ENCODE measurements at regions of chr3 and their contacts with region 1.

Region 1: GRCh38 chr3:14225421-14225820 is 46.8 kb downstream of the LSM3 start:
- DNase-seq: peak in 1 of 2 experiments; percentile 80
- H3K4me3 ChIP-seq: peak overlapping the region; percentile 49; the same call in 1 of the 2 replicates
- H3K27ac ChIP-seq: peak overlapping the region; percentile 86
- H3K4me1 ChIP-seq: peaks cover 82% of the 10 kb centered on the region
- H3K27me3 ChIP-seq: no peaks in the 10 kb centered on the region
- CTCF ChIP-seq: no peak

Region 2: GRCh38 chr3:14188041-14188754 is 37.2 kb before region 1 on chr3:
- CTCF ChIA-PET with region 1: no interaction called
- POLR2A ChIA-PET with region 1: no interaction called
- intact Hi-C with region 1: no loop called
- DNase-seq: no peak
- H3K4me3 ChIP-seq: no peak overlapping the region
- H3K27ac ChIP-seq: no peak overlapping the region
- H3K4me1 ChIP-seq: no peaks in the 10 kb centered on the region
- H3K27me3 ChIP-seq: no peaks in the 10 kb centered on the region
- CTCF ChIP-seq: no peak

Region 3: GRCh38 chr3:14253022-14253706 is 27.7 kb after region 1 on chr3:
- CTCF ChIA-PET with region 1: interaction called, 3 read pairs
- POLR2A ChIA-PET with region 1: interaction called, 4 read pairs
- intact Hi-C with region 1: loop called (anchors 1 kb)
- DNase-seq: peak; percentile 62 to 73
- H3K4me3 ChIP-seq: no peak overlapping the region
- H3K27ac ChIP-seq: no peak overlapping the region
- H3K4me1 ChIP-seq: peaks cover 37% of the 10 kb centered on the region
- H3K27me3 ChIP-seq: no peaks in the 10 kb centered on the region
- CTCF ChIP-seq: no peak

Region 4: DNA sequence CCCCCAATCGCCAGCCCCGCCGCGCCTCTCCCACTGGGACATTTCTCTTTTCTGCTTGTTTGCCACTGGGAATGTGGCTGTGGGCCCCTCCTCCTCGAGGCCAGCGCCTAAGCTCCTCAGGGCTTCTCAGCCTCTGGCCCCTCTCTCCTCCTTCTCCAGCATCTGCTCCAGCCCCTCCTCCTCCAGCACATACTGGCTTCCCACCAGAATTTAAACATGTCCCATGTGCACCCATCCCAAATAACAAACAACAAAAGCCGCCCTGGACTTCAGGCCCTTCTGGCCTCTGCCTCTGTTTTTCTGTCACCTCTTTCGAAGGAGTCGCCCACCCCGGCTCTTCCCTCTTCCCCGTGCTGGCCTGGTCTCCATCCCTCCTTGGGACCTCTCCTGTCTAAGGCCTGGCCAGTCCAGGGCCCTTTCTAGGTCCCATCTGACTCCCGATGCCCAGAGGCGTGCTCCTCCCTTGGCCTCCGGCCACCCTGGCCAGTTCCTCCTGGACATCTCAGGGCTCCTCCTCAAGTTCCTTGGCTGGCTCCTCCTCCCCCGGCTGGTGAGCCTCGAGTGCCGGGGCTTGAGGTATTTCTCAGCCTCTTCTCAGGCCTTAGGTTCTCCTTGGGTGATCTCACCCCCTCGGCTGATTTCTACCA is 82.4 kb after region 1 on chr3:
- CTCF ChIA-PET with region 1: no interaction called
- POLR2A ChIA-PET with region 1: no interaction called
- intact Hi-C with region 1: no loop called
- DNase-seq: no peak
- H3K4me3 ChIP-seq: no peak overlapping the region
- H3K27ac ChIP-seq: no peak overlapping the region
- H3K4me1 ChIP-seq: no peaks in the 10 kb centered on the region
- H3K27me3 ChIP-seq: no peaks in the 10 kb centered on the region
- CTCF ChIP-seq: no peak

Region 5: DNA sequence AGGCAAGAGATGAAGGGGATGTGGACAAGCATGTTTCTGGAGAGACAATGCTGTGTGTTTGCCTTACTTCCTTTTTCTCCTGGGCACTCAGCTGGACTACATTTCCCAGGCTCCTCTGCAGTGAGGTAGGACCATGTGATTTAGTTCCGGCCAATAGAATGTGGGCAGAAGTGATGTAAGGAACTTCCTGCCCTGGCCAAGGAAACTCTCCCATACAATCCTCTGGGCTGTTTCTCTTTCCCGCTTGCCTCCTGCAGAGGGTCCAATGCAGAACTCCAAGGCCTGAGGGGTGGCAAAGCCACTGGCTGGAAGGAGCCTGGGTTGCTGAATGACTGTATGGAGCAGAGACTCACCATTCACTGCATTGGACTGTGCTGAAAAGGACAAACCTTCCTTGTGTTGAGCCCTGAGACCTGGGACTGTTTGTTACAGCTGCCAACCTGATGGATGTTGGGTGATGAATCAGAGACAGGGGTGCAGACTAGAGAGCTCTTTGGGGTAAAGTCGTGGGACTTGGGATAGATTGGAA is 94.3 kb after region 1 on chr3:
- CTCF ChIA-PET with region 1: no interaction called
- POLR2A ChIA-PET with region 1: no interaction called
- intact Hi-C with region 1: loop called (anchors 2 kb)
- DNase-seq: peak; percentile 63 to 75
- H3K4me3 ChIP-seq: peak overlapping the region; percentile 55
- H3K27ac ChIP-seq: peak overlapping the region; percentile 35; the same call in 1 of the 2 replicates
- H3K4me1 ChIP-seq: peaks cover 62% of the 10 kb centered on the region
- H3K27me3 ChIP-seq: no peaks in the 10 kb centered on the region
- CTCF ChIP-seq: no peak

Region 6: DNA sequence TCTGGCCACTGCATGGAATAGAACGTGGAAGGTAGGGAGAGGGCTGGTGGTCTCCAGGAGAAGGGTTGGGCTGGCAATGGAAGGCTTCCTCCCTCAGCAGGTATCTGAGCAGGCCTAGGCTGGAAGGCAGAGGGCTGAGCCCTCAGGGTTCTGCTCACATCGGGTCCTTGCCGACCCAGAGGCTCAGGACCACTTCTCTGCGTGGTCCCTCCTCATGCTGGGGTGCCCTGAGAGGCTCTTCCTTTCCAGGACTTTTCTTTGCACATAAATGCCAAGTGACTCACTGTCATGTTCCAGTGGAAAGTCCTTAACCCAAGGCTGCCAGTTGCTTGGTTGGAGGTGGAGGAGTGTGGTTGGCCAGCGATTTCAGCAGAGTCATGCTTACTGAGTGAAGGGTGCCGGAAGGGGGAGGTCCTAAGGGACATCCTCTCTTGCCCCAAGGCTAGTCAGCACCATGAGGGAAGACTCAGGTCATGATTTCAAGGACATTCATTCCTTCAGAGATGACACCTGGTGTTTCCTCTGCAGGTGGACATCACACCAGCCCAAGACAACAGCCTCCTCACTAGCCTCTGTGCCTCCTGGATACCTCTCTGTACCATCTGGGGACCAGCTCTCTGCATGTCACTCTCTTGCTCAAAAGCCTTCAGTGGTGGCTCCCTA is 185.2 kb after region 1 on chr3:
- CTCF ChIA-PET with region 1: no interaction called
- POLR2A ChIA-PET with region 1: no interaction called
- intact Hi-C with region 1: loop called (anchors 1 kb)
- DNase-seq: peak; percentile 90 to 93
- H3K4me3 ChIP-seq: peak overlapping the region; percentile 32; the same call in 1 of the 2 replicates
- H3K27ac ChIP-seq: peak overlapping the region; percentile 99
- H3K4me1 ChIP-seq: peaks cover 99% of the 10 kb centered on the region
- H3K27me3 ChIP-seq: no peaks in the 10 kb centered on the region
- CTCF ChIP-seq: no peak

Measured in PC-9 (cell line).